ENCODE measurements at regions of chr1 and their contacts with region 1.

Region 1: DNA sequence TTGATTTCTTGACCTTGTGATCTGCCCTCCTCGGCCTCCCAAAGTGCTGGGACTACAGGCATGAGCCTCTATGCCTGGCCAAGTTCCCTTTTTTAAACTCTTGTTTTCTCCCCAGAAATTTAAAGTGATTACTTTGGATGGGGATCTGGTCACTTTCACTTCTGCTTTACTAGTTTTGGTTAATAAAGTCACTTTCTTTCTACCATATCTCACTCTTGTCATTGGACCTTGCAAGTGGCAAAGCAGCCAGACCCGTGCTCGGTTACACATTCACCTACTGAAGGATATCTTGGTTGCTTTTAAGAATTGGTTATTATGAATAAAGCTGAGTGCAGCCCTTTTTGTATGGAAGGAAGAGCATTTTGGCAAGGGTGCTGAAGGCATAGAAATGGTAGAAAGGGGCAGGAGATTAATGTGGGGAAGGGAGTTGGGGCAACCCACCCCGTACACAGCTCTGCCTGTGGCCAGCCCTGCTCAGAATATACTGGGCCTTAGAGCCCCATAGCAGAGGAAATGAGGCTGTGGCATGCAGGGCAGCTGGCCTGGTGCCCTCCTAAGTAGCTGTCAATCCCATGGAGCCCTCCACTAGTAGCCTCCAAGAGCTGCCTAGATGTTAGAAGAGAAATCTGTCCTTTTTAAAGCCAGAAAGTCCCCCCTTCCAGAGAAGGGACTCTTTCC is 40.7 kb downstream of the CD2 start:
- DNase-seq: peak; percentile 87
- ATAC-seq: peak; percentile 96
- H3K4me3 ChIP-seq: peak overlapping the region; percentile 14; the same call in 1 of the 2 replicates
- H3K27ac ChIP-seq: peak overlapping the region; percentile 57
- H3K4me1 ChIP-seq: peaks cover 11% of the 10 kb centered on the region
- H3K27me3 ChIP-seq: no peaks in the 10 kb centered on the region
- CTCF ChIP-seq: no peak
- EP300 ChIP-seq: peak; percentile 71 to 87
- POLR2A ChIP-seq: no peak
- RAD21 ChIP-seq: no peak

Region 2: GRCh38 chr1:116514708-116515525 is 280.0 kb before region 1 on chr1:
- CTCF ChIA-PET with region 1: no interaction called
- POLR2A ChIA-PET with region 1: no interaction called
- RAD21 ChIA-PET with region 1: no interaction called
- SMC1A ChIA-PET with region 1: no interaction called
- in situ Hi-C with region 1: no loop called
- intact Hi-C with region 1: no loop called
- DNase-seq: peak; percentile 88
- ATAC-seq: peak; percentile 88
- H3K4me3 ChIP-seq: no peak overlapping the region
- H3K27ac ChIP-seq: peak overlapping the region; percentile 85
- H3K4me1 ChIP-seq: peaks cover 52% of the 10 kb centered on the region
- H3K27me3 ChIP-seq: no peaks in the 10 kb centered on the region
- CTCF ChIP-seq: no peak
- EP300 ChIP-seq: peak in 1 of 2 experiments; percentile 57; a peak in 3 of 4 replicates
- POLR2A ChIP-seq: no peak
- RAD21 ChIP-seq: no peak; the same call in 1 of the 2 replicates

Region 3: GRCh38 chr1:116763787-116764465 is 31.0 kb before region 1 on chr1:
- CTCF ChIA-PET with region 1: interaction called, 68 read pairs
- POLR2A ChIA-PET with region 1: interaction called, 8 read pairs
- RAD21 ChIA-PET with region 1: interaction called, 49 read pairs
- SMC1A ChIA-PET with region 1: interaction called, 72 read pairs
- in situ Hi-C with region 1: no loop called
- intact Hi-C with region 1: no loop called
- DNase-seq: no peak
- ATAC-seq: peak; percentile 22
- H3K4me3 ChIP-seq: no peak overlapping the region
- H3K27ac ChIP-seq: no peak overlapping the region
- H3K4me1 ChIP-seq: peaks cover 10% of the 10 kb centered on the region
- H3K27me3 ChIP-seq: no peaks in the 10 kb centered on the region; a peak in 1 of 4 replicates
- CTCF ChIP-seq: peak; percentile 25 to 41 (median 36); a peak in 5 of 6 replicates
- EP300 ChIP-seq: no peak
- POLR2A ChIP-seq: no peak
- RAD21 ChIP-seq: peak; percentile 44

Region 4: DNA sequence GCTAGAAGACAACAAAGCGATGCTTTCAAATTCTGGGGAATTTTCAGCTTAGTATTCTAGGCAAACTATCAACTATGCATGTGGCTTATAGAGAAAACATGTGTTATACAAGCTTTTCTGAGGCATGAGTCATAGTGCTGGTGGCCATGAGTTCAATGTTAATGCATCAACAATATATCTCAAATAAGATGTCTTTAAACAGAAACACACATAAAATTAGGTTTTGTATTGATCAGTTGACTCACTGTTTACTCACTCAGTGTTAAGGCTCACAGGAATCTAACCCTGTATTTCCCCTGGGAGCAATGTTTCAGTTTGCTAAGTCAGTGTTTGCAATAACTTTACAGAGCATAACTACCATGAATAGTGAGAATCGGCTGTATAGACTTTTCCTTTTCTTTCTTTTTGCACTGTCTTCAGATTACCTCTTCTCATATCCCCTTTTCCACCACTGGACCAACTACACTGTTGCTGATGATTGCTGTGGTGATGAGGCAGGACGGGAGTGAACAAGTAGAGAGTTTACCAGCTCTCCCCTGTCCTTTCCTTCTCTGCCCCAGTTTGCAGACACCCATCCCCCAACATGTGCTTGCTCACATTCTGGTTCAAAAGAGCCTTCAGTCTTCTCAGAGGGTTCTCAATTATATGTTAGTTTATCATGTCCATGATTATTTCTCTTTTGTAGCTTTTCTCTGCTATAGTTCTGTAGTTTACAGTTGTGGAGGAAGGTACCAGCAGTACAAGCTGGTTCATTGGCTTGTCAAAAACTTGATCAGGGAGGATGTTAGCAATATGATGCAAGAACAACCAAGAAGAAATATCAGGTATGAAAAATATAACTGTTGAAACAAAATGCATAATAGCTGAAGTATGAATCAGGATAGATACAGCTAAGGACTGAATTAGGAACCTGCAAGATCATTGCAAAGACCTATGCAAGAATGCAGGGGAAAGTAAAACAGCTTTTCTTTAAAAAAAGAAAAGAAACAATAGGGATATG is 16.8 kb before region 1 on chr1:
- CTCF ChIA-PET with region 1: interaction called, 68 read pairs
- POLR2A ChIA-PET with region 1: interaction called, 4 read pairs
- RAD21 ChIA-PET with region 1: interaction called, 49 read pairs
- SMC1A ChIA-PET with region 1: interaction called, 72 read pairs
- in situ Hi-C with region 1: no loop called
- intact Hi-C with region 1: no loop called
- DNase-seq: no peak
- ATAC-seq: peak; percentile 84
- H3K4me3 ChIP-seq: no peak overlapping the region
- H3K27ac ChIP-seq: no peak overlapping the region
- H3K4me1 ChIP-seq: peaks cover 6% of the 10 kb centered on the region; the same call in 1 of the 2 replicates
- H3K27me3 ChIP-seq: no peaks in the 10 kb centered on the region
- CTCF ChIP-seq: no peak
- EP300 ChIP-seq: no peak
- POLR2A ChIP-seq: no peak
- RAD21 ChIP-seq: no peak

Region 5: DNA sequence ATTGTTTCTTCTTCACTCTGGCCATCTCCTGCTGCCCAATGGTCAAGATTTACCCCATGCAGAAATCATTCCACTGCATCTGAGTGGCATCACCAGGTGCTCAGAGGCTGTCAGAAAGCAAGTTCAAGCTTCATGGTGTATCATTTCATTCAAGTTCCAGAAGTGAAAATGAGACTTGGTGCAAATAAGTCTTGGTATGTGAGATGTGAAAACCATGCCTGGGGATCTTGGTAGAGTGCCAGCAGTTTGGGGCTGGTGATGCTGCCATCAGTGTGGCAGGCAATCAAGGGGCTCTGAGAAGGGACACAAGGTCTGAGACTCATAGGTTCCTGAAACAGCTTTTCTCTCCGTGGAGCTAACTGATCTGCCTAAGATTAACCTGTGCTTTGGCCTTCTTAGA is 11.3 kb after region 1 on chr1:
- CTCF ChIA-PET with region 1: interaction called, 8 read pairs
- POLR2A ChIA-PET with region 1: interaction called, 8 read pairs
- RAD21 ChIA-PET with region 1: interaction called, 7 read pairs
- SMC1A ChIA-PET with region 1: interaction called, 35 read pairs
- in situ Hi-C with region 1: no loop called
- intact Hi-C with region 1: no loop called
- DNase-seq: peak; percentile 76
- ATAC-seq: peak; percentile 81
- H3K4me3 ChIP-seq: no peak overlapping the region
- H3K27ac ChIP-seq: no peak overlapping the region
- H3K4me1 ChIP-seq: peaks cover 5% of the 10 kb centered on the region
- H3K27me3 ChIP-seq: no peaks in the 10 kb centered on the region
- CTCF ChIP-seq: no peak
- EP300 ChIP-seq: no peak
- POLR2A ChIP-seq: no peak
- RAD21 ChIP-seq: no peak

Region 6: DNA sequence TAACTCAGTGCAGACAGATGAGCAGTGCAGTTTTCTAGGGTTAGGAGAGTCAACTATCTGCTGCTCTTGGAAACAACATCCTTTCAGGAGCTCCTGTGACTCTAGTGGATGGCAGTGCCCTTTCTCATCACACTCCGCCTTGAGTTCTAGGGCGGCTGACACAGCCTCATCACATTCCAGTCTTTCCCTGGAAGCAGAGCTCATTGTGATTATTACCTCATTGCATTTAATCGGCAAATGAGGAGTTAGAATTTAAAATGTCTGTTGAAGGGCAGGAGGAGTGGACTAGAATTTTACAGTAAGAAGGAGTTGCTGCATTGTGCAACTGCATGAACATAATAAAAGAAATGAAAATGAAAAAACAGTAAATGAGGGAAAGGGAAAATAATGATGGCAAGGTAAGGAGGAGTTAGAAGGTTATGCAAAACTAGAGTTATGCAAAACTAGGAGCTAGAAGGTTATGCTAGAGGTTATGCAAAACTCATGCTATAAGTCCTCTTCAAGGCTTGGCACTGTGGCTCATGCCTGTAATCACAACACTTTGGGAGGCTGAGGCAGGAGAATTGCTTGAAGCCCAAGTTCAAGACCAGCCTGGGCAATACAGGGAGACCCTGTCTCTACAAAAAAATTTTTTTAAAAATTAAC is 107.9 kb after region 1 on chr1:
- CTCF ChIA-PET with region 1: no interaction called
- POLR2A ChIA-PET with region 1: no interaction called
- RAD21 ChIA-PET with region 1: no interaction called
- SMC1A ChIA-PET with region 1: no interaction called
- in situ Hi-C with region 1: no loop called
- intact Hi-C with region 1: no loop called
- DNase-seq: no peak
- ATAC-seq: peak; percentile 52
- H3K4me3 ChIP-seq: no peak overlapping the region
- H3K27ac ChIP-seq: no peak overlapping the region
- H3K4me1 ChIP-seq: no peaks in the 10 kb centered on the region
- H3K27me3 ChIP-seq: no peaks in the 10 kb centered on the region; a peak in 1 of 4 replicates
- CTCF ChIP-seq: no peak
- EP300 ChIP-seq: no peak
- POLR2A ChIP-seq: no peak
- RAD21 ChIP-seq: no peak